CD4-positive, alpha-beta T cell (primary cell): ENCODE measurements at regions of chr3 and their contacts with region 1.

Region 1: GRCh38 chr3:9731206-9732079 is at the start of gene BRPF1:
- DNase-seq: peak; percentile 98 to 100 (median 100)
- ATAC-seq: peak; percentile 91
- H3K4me3 ChIP-seq: peak within 1 kb of the TSS; percentile 86
- H3K4me3 Mint-ChIP-seq: peak within 1 kb of the TSS; percentile 88
- H3K27ac ChIP-seq: peak within 1 kb of the TSS; percentile 84 to 96
- H3K27ac Mint-ChIP-seq: peak within 1 kb of the TSS; percentile 91
- H3K4me1 ChIP-seq: peaks cover 45% of the 10 kb centered on the region
- H3K4me1 Mint-ChIP-seq: peaks cover 79% of the 10 kb centered on the region
- H3K27me3 ChIP-seq: no peaks in the 10 kb centered on the region
- H3K27me3 Mint-ChIP-seq: no peaks in the 10 kb centered on the region
- CTCF ChIP-seq: no peak
- total RNA-seq, gene BRPF1: 23.7 to 25.6 TPM

Region 2: GRCh38 chr3:9352917-9353752 is 378.3 kb before region 1 on chr3:
- CTCF ChIA-PET with region 1: no interaction called
- POLR2A ChIA-PET with region 1: no interaction called
- intact Hi-C with region 1: loop called in 1 of 2 experiments (anchors 5 kb)
- DNase-seq: peak; percentile 21 to 80 (median 52)
- ATAC-seq: peak; percentile 77
- H3K4me3 ChIP-seq: no peak overlapping the region
- H3K4me3 Mint-ChIP-seq: no peak overlapping the region
- H3K27ac ChIP-seq: no peak overlapping the region
- H3K27ac Mint-ChIP-seq: no peak overlapping the region
- H3K4me1 ChIP-seq: peaks cover 13% of the 10 kb centered on the region
- H3K4me1 Mint-ChIP-seq: peaks cover 4% of the 10 kb centered on the region
- H3K27me3 ChIP-seq: no peaks in the 10 kb centered on the region
- H3K27me3 Mint-ChIP-seq: no peaks in the 10 kb centered on the region
- CTCF ChIP-seq: peak; percentile 92

Region 3: GRCh38 chr3:9649791-9650521 is 81.5 kb before region 1 on chr3:
- CTCF ChIA-PET with region 1: no interaction called
- POLR2A ChIA-PET with region 1: interaction called, 32 read pairs
- intact Hi-C with region 1: loop called (anchors 2 to 10 kb)
- DNase-seq: peak in 3 of 14 experiments; percentile 40 to 57 (median 53)
- ATAC-seq: no peak
- H3K4me3 ChIP-seq: peak overlapping the region; percentile 92
- H3K4me3 Mint-ChIP-seq: peak overlapping the region; percentile 96
- H3K27ac ChIP-seq: peak overlapping the region; percentile 78 to 92
- H3K27ac Mint-ChIP-seq: peak overlapping the region; percentile 87
- H3K4me1 ChIP-seq: peaks cover 36% of the 10 kb centered on the region
- H3K4me1 Mint-ChIP-seq: peaks cover 35% of the 10 kb centered on the region
- H3K27me3 ChIP-seq: no peaks in the 10 kb centered on the region
- H3K27me3 Mint-ChIP-seq: no peaks in the 10 kb centered on the region
- CTCF ChIP-seq: no peak

Region 4: DNA sequence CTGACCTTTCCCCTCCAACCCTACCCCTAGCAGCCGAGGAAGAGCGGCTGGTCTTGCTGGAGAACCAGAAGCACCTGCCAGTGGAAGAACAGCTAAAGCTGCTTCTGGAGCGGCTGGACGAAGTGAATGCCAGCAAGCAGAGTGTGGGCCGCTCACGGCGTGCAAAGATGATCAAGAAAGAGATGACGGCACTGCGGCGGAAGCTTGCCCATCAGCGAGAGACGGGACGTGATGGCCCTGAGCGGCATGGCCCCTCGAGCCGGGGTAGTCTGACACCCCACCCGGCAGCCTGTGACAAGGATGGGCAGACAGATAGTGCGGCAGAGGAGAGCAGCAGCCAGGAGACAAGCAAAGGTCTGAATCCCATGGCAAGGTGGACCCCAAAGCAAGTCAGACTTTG is 12.1 kb after region 1 on chr3:
- CTCF ChIA-PET with region 1: no interaction called
- POLR2A ChIA-PET with region 1: interaction called, 16 read pairs
- intact Hi-C with region 1: loop called in 1 of 2 experiments (anchors 1 kb)
- DNase-seq: no peak
- ATAC-seq: no peak
- H3K4me3 ChIP-seq: no peak overlapping the region
- H3K4me3 Mint-ChIP-seq: no peak overlapping the region
- H3K27ac ChIP-seq: no peak overlapping the region
- H3K27ac Mint-ChIP-seq: no peak overlapping the region
- H3K4me1 ChIP-seq: no peaks in the 10 kb centered on the region
- H3K4me1 Mint-ChIP-seq: peaks cover 4% of the 10 kb centered on the region
- H3K27me3 ChIP-seq: no peaks in the 10 kb centered on the region
- H3K27me3 Mint-ChIP-seq: no peaks in the 10 kb centered on the region
- CTCF ChIP-seq: no peak

Region 5: DNA sequence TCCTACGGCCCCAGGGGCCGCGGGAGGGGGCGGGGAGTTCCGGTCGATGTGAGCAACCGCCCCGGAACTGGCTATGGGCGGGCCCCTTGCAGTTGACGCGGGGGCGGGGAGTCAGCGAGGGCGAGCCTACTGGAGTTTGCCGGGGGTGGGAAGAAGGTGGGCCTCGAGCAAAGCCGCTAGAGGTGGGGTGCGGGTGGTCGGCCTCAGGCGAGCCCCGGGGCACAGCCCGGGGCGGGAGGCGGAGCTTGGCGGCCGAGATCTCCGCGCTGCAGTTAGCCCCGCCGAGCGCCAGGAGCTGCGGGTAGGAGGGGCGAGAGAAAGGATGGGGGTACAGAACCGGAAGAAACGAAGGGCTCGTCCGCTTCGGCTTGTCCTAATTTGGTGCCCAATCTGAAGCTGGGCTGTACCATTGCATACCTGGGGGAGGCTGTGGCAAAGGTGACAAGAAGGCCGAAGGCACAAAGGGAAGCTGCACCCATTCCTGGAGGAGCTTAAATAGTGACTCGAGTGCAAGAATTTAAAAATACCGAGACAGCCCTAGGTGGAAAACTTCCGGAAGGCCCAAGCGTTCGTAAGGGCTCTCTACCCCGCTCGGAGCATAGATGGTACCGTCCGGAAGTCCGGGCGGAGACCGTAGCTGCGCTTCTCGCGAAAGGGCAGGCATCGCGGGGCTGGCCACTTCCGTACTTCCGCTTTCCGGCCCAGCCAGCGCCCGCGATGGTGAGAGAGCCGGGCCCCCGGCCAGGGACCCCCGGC is 61.1 kb after region 1 on chr3 and contains the starts of genes ARPC4 and TADA3:
- CTCF ChIA-PET with region 1: interaction called, 6 read pairs
- POLR2A ChIA-PET with region 1: interaction called, 30 read pairs
- intact Hi-C with region 1: loop called (anchors 1 to 10 kb)
- DNase-seq: peak; percentile 82 to 96 (median 88)
- ATAC-seq: peak; percentile 85
- H3K4me3 ChIP-seq: peak within 1 kb of the TSS; percentile 99
- H3K4me3 Mint-ChIP-seq: peak within 1 kb of the TSS; percentile 99
- H3K27ac ChIP-seq: peak within 1 kb of the TSS; percentile 95 to 98
- H3K27ac Mint-ChIP-seq: peak within 1 kb of the TSS; percentile 99
- H3K4me1 ChIP-seq: peaks cover 64% of the 10 kb centered on the region
- H3K4me1 Mint-ChIP-seq: peaks cover 76% of the 10 kb centered on the region
- H3K27me3 ChIP-seq: no peaks in the 10 kb centered on the region
- H3K27me3 Mint-ChIP-seq: no peaks in the 10 kb centered on the region
- CTCF ChIP-seq: no peak
- total RNA-seq, gene ARPC4: 88.7 to 91.3 TPM
- total RNA-seq, gene TADA3: 14.7 to 16.5 TPM